Activated CD8-positive, alpha-beta memory T cell treated with anti-CD3 and anti-CD28 coated beads, Interleukin-2, amount 10 ng/mL, durations not matched to agents 7 days and 5 days (primary cell): ENCODE measurements at regions of chr1 and their contacts with region 1.

Region 1: DNA sequence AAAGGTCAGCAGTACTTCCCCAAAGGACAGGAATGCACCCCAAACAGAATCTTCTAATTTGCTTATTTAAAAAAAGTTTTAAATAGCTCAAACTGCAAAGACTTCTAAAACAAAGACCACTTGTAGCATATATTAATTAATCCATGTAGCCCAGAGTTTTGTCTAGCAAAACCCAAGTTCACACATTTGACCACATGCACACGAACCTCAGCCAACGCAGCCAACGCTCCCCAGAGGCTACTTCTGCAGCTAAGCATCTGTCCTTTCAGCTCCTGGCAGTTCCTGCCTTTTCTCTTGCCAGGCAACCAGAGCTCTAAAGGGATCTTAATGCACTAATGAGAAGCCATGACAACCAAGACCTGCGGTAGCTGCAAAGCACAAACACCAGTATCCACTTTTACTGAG is 89.6 kb downstream of the RERE start:
- DNase-seq: no peak
- ATAC-seq: no peak
- H3K4me3 Mint-ChIP-seq: no peak overlapping the region
- H3K27ac Mint-ChIP-seq: no peak overlapping the region
- H3K4me1 Mint-ChIP-seq: peaks cover 20% of the 10 kb centered on the region
- H3K27me3 Mint-ChIP-seq: no peaks in the 10 kb centered on the region

Region 2: DNA sequence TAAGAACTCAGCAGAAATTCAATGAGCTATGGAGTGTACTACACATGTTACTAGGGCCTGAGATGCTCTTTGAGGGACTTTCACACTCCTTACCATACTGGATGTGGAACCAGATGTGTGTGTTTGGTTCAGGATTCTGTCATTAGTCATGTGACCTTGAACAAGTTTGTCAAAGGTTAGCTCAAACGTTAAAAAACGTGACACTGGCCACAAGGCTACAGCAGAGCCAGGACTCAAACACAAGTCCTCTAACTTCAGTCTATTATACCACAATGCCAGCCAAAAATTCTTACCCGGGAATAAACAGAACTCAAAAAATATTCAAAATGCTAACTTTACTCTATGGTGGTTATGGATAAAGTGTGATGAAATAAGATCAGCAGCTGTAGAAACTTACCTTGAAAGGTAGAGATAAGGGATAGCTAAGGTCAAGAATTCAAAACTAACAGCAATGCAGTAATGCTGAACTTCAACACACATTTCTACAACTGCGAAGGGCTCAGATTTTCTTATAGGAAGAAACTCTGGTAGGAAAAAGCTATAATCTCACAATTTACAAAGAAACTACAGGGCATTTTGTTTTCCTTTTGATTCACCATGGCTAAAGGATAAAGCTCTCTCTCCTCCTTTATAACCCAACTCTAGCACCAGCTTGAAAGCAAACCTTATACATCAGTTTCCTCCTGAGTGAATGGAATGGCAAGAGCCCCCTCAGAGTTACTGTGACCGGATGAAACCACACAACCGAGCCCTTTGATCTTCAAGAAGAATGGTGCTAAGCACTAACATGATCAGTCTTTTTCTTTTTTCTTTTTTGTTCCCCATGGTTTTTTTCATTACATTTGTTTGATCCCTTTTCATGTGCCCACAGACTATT is 176.0 kb before region 1 on chr1:
- CTCF ChIA-PET with region 1: interaction called, 10 read pairs
- DNase-seq: no peak
- ATAC-seq: no peak
- H3K4me3 Mint-ChIP-seq: no peak overlapping the region
- H3K27ac Mint-ChIP-seq: peak overlapping the region; percentile 13
- H3K4me1 Mint-ChIP-seq: peaks cover 29% of the 10 kb centered on the region
- H3K27me3 Mint-ChIP-seq: no peaks in the 10 kb centered on the region

Region 3: GRCh38 chr1:8560611-8561544 is 166.9 kb before region 1 on chr1:
- CTCF ChIA-PET with region 1: interaction called, 62 read pairs
- DNase-seq: no peak
- ATAC-seq: peak; percentile 80
- H3K4me3 Mint-ChIP-seq: no peak overlapping the region
- H3K27ac Mint-ChIP-seq: peak overlapping the region; percentile 12
- H3K4me1 Mint-ChIP-seq: peaks cover 17% of the 10 kb centered on the region
- H3K27me3 Mint-ChIP-seq: no peaks in the 10 kb centered on the region

Region 4: GRCh38 chr1:8571200-8571984 is 156.4 kb before region 1 on chr1:
- CTCF ChIA-PET with region 1: interaction called, 16 read pairs
- DNase-seq: no peak
- ATAC-seq: no peak
- H3K4me3 Mint-ChIP-seq: no peak overlapping the region
- H3K27ac Mint-ChIP-seq: no peak overlapping the region
- H3K4me1 Mint-ChIP-seq: no peaks in the 10 kb centered on the region
- H3K27me3 Mint-ChIP-seq: no peaks in the 10 kb centered on the region

Region 5: DNA sequence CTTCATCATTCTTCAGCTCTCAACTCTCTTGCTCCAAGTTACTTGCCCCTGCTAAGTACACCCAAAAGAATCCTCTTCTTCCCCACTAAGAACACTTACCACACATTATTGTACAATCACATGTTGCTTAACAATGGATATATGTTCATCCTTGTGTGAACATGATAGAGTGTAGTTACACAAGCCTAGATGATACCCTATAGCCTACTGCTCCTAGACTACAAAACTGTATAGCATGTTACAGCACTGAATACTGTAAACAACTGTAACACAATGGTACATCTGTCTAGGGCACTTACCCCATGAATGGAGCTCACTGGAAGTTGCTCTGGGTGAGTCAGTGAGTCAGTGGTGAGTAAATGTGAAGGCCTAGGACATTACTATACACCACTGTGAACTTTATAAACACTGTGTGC is 12.2 kb after region 1 on chr1:
- CTCF ChIA-PET with region 1: interaction called, 16 read pairs
- DNase-seq: no peak
- ATAC-seq: no peak
- H3K4me3 Mint-ChIP-seq: no peak overlapping the region
- H3K27ac Mint-ChIP-seq: no peak overlapping the region
- H3K4me1 Mint-ChIP-seq: no peaks in the 10 kb centered on the region
- H3K27me3 Mint-ChIP-seq: no peaks in the 10 kb centered on the region

Region 6: DNA sequence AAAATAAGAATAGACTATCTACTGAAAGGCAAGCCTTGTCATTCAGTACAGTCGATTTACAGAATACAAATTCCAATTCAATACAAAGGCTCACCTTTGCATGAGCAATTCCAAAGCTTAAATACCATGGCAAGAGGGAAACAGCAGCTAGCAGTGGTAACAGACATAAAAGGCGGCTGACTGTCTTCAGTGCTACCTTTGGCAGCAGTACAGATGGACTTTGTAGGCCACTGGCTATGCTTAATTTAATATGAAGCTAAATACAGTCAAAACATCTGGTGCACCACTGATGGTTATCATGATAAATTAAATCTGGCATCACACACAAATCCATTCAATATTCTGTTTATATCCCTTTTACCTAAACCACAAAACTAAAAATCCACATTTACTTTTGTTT is 27.2 kb after region 1 on chr1:
- CTCF ChIA-PET with region 1: no interaction called
- DNase-seq: no peak
- ATAC-seq: no peak
- H3K4me3 Mint-ChIP-seq: no peak overlapping the region
- H3K27ac Mint-ChIP-seq: no peak overlapping the region
- H3K4me1 Mint-ChIP-seq: peaks cover 6% of the 10 kb centered on the region
- H3K27me3 Mint-ChIP-seq: no peaks in the 10 kb centered on the region

Region 7: GRCh38 chr1:8782001-8782620 is 54.3 kb after region 1 on chr1:
- CTCF ChIA-PET with region 1: no interaction called
- DNase-seq: no peak
- ATAC-seq: no peak
- H3K4me3 Mint-ChIP-seq: no peak overlapping the region
- H3K27ac Mint-ChIP-seq: no peak overlapping the region
- H3K4me1 Mint-ChIP-seq: peaks cover 11% of the 10 kb centered on the region
- H3K27me3 Mint-ChIP-seq: no peaks in the 10 kb centered on the region